ENCODE measurements at regions of chr10 and their contacts with region 1.

Region 1: GRCh38 chr10:122298598-122299301 is 27.7 kb downstream of the BTBD16 start:
- DNase-seq: peak; percentile 76
- ATAC-seq: peak; percentile 95
- H3K4me3 Mint-ChIP-seq: peak overlapping the region; percentile 33; the same call in 1 of the 2 replicates
- H3K27ac Mint-ChIP-seq: no peak overlapping the region
- H3K4me1 Mint-ChIP-seq: peaks cover 14% of the 10 kb centered on the region
- H3K27me3 Mint-ChIP-seq: no peaks in the 10 kb centered on the region
- CTCF ChIP-seq: peak; percentile 85

Region 2: GRCh38 chr10:121994390-121994961 is 304.3 kb before region 1 on chr10:
- CTCF ChIA-PET with region 1: no interaction called
- POLR2A ChIA-PET with region 1: no interaction called
- DNase-seq: peak; percentile 37
- ATAC-seq: peak; percentile 89
- H3K4me3 Mint-ChIP-seq: no peak overlapping the region; the same call in 1 of the 2 replicates
- H3K27ac Mint-ChIP-seq: no peak overlapping the region; the same call in 1 of the 2 replicates
- H3K4me1 Mint-ChIP-seq: peaks cover 23% of the 10 kb centered on the region
- H3K27me3 Mint-ChIP-seq: peaks cover 2% of the 10 kb centered on the region
- CTCF ChIP-seq: no peak

Region 3: DNA sequence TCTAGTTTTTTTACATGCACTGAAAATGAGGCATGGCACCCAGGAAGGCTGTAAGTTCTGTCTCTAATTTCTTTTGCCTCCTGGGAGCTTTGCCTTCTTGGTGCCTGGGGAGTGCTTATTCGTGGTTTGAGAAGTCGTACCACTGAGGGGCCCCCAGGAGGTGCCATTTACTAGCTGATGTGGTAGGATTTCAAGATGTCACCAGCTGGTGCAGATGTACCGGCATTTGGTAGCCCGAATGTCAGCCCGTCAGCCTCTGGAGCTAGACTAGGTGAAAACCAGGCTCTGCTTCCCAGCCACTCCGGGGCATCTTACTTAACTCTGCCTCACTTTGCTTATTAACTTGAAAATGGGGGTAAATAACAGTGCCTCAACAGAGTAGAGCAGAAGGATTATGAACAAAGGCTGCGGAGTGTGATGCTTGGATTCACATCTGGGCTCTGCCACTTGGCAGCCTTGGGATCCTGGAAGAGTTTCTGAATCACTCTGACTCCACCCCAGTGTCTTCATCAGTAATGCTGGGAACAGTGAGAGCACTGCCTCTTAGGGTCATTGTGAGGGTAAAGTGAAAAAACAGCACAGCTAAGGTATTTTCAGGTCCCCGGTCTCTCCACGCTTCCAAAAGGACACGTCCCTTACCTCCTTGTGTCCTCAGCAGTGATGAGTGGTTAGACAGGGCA is 59.0 kb before region 1 on chr10:
- CTCF ChIA-PET with region 1: no interaction called
- POLR2A ChIA-PET with region 1: no interaction called
- DNase-seq: no peak
- ATAC-seq: no peak
- H3K4me3 Mint-ChIP-seq: no peak overlapping the region
- H3K27ac Mint-ChIP-seq: no peak overlapping the region
- H3K4me1 Mint-ChIP-seq: no peaks in the 10 kb centered on the region
- H3K27me3 Mint-ChIP-seq: no peaks in the 10 kb centered on the region
- CTCF ChIP-seq: no peak

Region 4: DNA sequence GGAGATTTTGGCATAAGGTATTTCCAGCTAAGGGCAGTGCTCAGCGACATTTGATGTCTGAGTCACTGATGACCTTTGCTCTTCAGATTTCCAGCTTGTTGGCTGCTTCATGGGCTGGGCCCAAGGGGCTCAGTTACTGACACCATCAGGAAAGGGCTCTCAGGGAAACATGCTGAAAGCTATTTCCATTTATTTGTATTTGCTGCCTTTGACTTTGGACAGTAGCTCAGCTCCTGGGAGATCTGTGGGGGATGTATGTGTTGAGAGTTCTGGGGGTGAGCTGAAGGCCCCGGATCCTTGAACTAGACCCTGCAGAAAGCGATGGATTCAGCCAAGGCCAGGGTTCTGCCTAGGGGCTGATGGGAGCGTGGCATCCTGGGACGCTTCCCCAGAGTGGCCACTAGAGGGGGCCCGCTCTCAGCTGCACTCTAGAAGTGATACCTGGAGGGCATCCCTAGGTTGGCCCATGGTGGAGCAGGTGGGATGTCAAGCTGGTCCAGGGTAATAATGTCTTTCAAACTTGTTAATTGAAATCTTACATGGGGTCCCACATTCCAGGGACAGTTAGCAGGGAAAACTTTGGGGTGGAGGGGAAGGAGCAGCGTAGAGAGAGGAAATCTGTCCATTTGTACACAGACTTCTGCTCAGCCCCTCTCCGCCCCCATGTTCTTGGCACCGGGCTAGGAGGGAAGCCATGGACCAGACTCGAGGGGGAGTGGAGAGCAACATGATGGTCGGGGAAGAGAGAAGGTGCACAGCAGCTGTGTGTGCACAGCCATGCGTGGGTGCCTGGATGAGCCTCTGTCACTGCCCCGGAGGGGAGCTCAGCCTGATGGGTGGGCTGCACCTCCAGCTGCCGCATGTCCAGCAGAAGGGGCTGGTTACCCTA is 30.7 kb before region 1 on chr10:
- CTCF ChIA-PET with region 1: interaction called, 14 read pairs
- POLR2A ChIA-PET with region 1: no interaction called
- DNase-seq: peak; percentile 80
- ATAC-seq: peak; percentile 96
- H3K4me3 Mint-ChIP-seq: no peak overlapping the region
- H3K27ac Mint-ChIP-seq: no peak overlapping the region
- H3K4me1 Mint-ChIP-seq: peaks cover 5% of the 10 kb centered on the region
- H3K27me3 Mint-ChIP-seq: no peaks in the 10 kb centered on the region; the same call in 1 of the 2 replicates
- CTCF ChIP-seq: peak; percentile 87

Region 5: DNA sequence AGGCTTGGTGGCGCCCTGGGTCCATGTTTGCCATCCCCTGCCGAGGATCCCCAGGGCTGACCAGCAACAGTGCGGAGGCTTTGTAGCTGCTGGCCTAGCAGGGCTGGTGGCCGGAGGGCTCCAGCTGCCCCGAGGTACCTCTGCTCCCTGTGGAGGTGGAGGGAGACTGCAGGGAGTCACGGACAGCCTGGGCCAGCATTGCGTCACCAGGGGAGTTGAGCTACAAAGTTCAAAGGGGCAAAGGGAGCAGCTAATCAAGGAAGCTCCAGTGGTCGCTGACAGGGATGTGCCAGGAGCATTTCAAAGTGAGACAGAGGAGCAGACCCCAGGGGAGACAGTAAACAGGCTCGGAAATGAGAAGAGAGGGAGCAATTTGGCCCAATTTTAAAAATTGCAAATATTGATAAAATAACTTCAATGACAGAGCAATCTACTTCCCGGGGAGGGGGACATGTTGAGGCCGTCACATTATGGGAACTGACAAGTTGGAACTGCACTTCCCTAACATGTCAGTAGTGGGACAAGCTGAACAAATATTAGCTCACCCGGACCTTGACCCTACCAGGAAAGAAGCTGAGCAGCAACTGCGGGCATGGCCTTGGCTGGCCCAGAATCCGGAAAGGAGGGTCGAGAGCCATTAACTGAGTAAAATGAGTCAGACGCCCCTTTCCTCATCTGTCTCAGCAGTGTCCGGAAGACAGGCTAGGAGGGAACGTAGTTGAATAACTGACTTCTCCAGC is 11.7 kb after region 1 on chr10:
- CTCF ChIA-PET with region 1: interaction called, 15 read pairs
- POLR2A ChIA-PET with region 1: no interaction called
- DNase-seq: no peak
- ATAC-seq: peak; percentile 46
- H3K4me3 Mint-ChIP-seq: no peak overlapping the region
- H3K27ac Mint-ChIP-seq: no peak overlapping the region
- H3K4me1 Mint-ChIP-seq: peaks cover 18% of the 10 kb centered on the region
- H3K27me3 Mint-ChIP-seq: no peaks in the 10 kb centered on the region; the same call in 1 of the 2 replicates
- CTCF ChIP-seq: no peak

Region 6: DNA sequence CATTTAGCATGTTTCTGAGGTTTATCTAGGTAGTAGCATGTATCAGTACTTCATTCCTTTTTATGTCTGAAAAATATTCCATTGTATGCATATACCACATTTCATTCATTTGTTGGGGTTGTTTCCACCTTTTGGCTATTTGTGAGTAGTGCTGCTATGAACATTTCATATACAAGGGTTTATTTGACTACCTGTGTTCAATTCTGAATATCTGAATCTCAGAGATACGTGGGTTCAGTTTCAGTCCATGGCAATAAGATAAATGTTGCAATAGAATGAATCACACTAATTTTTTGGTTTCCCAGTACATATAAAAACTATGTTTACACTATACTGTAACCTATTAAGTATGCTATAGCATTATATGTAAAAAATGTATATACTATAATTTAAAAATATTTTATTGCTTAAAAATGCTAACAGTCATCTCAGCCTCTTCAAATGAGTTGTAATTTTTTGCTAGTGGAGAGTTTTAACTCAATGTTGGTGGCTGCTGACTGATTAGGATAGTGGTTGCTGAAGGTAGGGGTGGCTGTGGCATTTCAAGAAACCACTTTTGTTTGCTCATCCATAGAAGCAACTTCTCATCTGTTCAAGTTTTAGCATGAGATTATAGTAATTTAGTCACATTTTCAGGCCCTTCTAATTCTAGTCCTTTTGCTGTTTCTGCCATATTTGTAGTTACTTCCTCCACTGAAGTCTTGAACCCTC is 89.7 kb after region 1 on chr10:
- CTCF ChIA-PET with region 1: no interaction called
- POLR2A ChIA-PET with region 1: no interaction called
- DNase-seq: no peak
- ATAC-seq: no peak
- H3K4me3 Mint-ChIP-seq: no peak overlapping the region
- H3K27ac Mint-ChIP-seq: no peak overlapping the region
- H3K4me1 Mint-ChIP-seq: no peaks in the 10 kb centered on the region
- H3K27me3 Mint-ChIP-seq: no peaks in the 10 kb centered on the region
- CTCF ChIP-seq: no peak

Region 7: DNA sequence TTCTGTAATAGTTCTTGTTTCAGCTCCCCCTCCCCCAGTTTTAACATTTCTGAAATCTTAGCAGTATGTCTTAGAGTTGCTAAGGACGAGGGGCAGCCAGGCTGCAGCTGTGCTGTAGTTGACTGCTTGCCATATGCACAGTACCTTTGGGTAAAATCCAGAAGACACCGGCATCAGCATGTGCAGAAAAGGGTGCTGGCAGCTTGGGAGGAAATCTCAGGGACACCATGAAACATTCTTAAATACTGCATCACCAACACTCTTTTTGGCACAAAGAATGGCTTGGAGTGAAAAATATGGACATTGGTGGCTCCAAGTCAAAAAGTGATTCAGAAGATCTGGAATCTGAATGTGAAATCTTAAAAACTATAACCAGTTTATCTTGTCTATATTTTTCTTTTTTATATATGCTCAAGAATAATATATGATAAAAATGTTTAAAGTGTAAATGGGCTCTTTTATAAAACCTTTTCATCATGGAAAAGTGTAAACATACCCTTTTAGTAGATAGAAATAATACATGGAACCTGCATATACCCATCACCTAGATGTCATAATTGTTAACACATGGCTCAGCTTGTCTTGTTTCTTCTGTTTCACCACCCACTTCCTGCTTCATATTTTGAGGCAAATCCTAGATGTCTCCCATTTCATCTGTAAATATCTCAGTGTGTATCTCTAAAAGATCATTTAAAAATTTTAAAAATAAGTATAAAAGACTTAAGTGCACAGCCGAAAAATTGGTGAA is 121.3 kb after region 1 on chr10:
- CTCF ChIA-PET with region 1: interaction called, 11 read pairs
- POLR2A ChIA-PET with region 1: no interaction called
- DNase-seq: no peak
- ATAC-seq: no peak
- H3K4me3 Mint-ChIP-seq: no peak overlapping the region
- H3K27ac Mint-ChIP-seq: no peak overlapping the region
- H3K4me1 Mint-ChIP-seq: peaks cover 7% of the 10 kb centered on the region
- H3K27me3 Mint-ChIP-seq: no peaks in the 10 kb centered on the region
- CTCF ChIP-seq: no peak

Region 8: DNA sequence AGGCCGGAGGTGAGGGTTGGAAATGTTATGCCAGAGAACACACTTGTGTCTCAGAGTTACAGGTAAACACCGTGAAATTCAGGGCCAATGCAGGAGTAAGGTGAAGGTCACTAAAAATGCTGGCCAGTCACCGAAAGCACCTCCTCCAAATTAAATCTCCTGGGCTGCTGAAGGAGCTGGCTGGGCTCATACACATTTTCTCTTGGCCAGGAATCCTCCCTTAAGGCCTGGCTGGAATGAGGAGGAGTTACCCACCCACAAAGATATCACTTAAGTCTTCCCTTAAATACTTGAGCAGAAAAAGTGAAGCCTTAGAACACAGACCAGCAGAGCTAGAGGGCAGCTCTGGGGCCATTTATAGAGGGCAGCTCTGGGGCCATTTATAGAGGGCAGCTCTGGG is 208.9 kb after region 1 on chr10:
- CTCF ChIA-PET with region 1: interaction called, 10 read pairs
- POLR2A ChIA-PET with region 1: no interaction called
- DNase-seq: no peak
- ATAC-seq: no peak
- H3K4me3 Mint-ChIP-seq: no peak overlapping the region
- H3K27ac Mint-ChIP-seq: no peak overlapping the region
- H3K4me1 Mint-ChIP-seq: peaks cover 5% of the 10 kb centered on the region; the same call in 1 of the 2 replicates
- H3K27me3 Mint-ChIP-seq: no peaks in the 10 kb centered on the region
- CTCF ChIP-seq: no peak

Region 9: GRCh38 chr10:122648599-122649428 is 350.1 kb after region 1 on chr10:
- CTCF ChIA-PET with region 1: interaction called, 16 read pairs
- POLR2A ChIA-PET with region 1: no interaction called
- DNase-seq: peak; percentile 78
- ATAC-seq: peak; percentile 96
- H3K4me3 Mint-ChIP-seq: no peak overlapping the region
- H3K27ac Mint-ChIP-seq: no peak overlapping the region
- H3K4me1 Mint-ChIP-seq: no peaks in the 10 kb centered on the region
- H3K27me3 Mint-ChIP-seq: peaks cover 6% of the 10 kb centered on the region; the same call in 1 of the 2 replicates
- CTCF ChIP-seq: peak; percentile 85

Region 10: GRCh38 chr10:123013456-123014419 is 715.0 kb after region 1 on chr10:
- CTCF ChIA-PET with region 1: no interaction called
- POLR2A ChIA-PET with region 1: no interaction called
- DNase-seq: no peak
- ATAC-seq: no peak
- H3K4me3 Mint-ChIP-seq: no peak overlapping the region
- H3K27ac Mint-ChIP-seq: no peak overlapping the region
- H3K4me1 Mint-ChIP-seq: peaks cover 52% of the 10 kb centered on the region
- H3K27me3 Mint-ChIP-seq: peaks cover 64% of the 10 kb centered on the region
- CTCF ChIP-seq: no peak

Measured in WTC11 (cell line).